Natural killer cell (primary cell): ENCODE measurements at regions of chr10 and their contacts with region 1.

Region 1: GRCh38 chr10:22704471-22704911 is 9.9 kb downstream of the PIP4K2A start:
- DNase-seq: peak in 1 of 2 donors; percentile 18
- ATAC-seq: no peak
- H3K4me3 ChIP-seq: no peak overlapping the region
- H3K4me3 Mint-ChIP-seq: peak overlapping the region; percentile 87
- H3K27ac ChIP-seq: peak overlapping the region; percentile 61
- H3K27ac Mint-ChIP-seq: peak overlapping the region; percentile 82 to 87
- H3K4me1 ChIP-seq: peaks cover 74% of the 10 kb centered on the region
- H3K4me1 Mint-ChIP-seq: peaks cover 99% of the 10 kb centered on the region in 2 donors
- H3K27me3 ChIP-seq: no peaks in the 10 kb centered on the region
- H3K27me3 Mint-ChIP-seq: no peaks in the 10 kb centered on the region
- CTCF ChIP-seq: no peak

Region 2: DNA sequence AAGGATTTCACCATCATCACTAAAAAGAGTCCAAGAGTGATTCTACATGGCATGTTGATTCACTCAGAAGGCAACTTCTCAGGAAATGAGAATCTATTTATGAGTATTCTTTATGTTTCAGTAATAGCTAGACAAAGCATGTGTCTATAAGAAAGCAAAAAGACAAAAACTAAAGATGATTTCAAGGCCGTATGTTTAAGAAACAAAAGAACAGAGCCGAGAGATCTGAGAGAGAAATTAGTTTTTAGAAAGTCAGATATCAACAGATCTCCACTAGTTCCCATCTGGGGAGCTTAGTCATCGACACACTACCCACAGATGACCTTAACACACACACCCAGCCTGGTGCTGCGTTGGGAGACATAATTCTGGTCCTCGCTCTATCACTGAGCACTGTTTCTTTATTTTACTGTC is 11.1 kb before region 1 on chr10:
- intact Hi-C with region 1: loop called (anchors 2 kb)
- DNase-seq: peak in 1 of 2 donors; percentile 48
- ATAC-seq: peak; percentile 89 to 93 (median 90)
- H3K4me3 ChIP-seq: no peak overlapping the region
- H3K4me3 Mint-ChIP-seq: peak overlapping the region; percentile 84
- H3K27ac ChIP-seq: peak overlapping the region; percentile 62
- H3K27ac Mint-ChIP-seq: peak overlapping the region; percentile 79 to 99
- H3K4me1 ChIP-seq: peaks cover 48% of the 10 kb centered on the region
- H3K4me1 Mint-ChIP-seq: peaks cover 76 to 84% of the 10 kb centered on the region in 2 donors
- H3K27me3 ChIP-seq: no peaks in the 10 kb centered on the region
- H3K27me3 Mint-ChIP-seq: no peaks in the 10 kb centered on the region
- CTCF ChIP-seq: no peak

Region 3: DNA sequence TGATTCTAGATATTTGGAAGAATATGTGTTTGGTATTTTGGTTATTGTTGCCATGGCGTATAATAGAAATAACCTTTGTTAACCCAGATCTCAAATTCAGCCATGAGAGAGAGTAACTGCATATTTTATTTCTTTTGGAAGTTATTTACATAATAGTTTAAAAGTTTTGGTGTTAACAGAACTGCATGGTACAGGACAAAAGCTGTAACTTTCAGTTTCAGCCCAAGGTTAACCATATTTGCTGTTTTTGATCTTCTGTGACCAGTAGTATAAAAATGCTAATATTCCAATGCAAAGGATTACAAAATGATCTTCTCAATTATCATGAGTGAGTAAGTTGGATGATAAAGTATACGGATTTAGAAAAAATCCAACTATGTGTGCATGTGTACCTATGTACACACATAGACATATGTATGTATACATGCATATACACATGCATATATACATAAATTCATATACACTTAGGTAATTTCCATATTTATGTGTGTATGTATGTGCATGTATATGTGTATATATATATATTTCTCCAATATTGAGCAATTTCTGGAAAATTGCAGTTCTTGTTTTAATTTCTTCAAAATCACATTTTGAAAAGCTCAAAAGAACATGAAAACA is 47.9 kb after region 1 on chr10:
- intact Hi-C with region 1: no loop called
- DNase-seq: no peak
- ATAC-seq: no peak
- H3K4me3 ChIP-seq: no peak overlapping the region
- H3K4me3 Mint-ChIP-seq: no peak overlapping the region
- H3K27ac ChIP-seq: no peak overlapping the region
- H3K27ac Mint-ChIP-seq: no peak overlapping the region
- H3K4me1 ChIP-seq: no peaks in the 10 kb centered on the region
- H3K4me1 Mint-ChIP-seq: peaks cover 12 to 17% of the 10 kb centered on the region in 2 donors
- H3K27me3 ChIP-seq: no peaks in the 10 kb centered on the region
- H3K27me3 Mint-ChIP-seq: no peaks in the 10 kb centered on the region
- CTCF ChIP-seq: no peak